Activated CD8-positive, alpha-beta memory T cell treated with anti-CD3 and anti-CD28 coated beads, Interleukin-2, amount 10 ng/mL, durations not matched to agents 7 days and 5 days (primary cell): ENCODE measurements at regions of chr3 and their contacts with region 1.

Region 1: DNA sequence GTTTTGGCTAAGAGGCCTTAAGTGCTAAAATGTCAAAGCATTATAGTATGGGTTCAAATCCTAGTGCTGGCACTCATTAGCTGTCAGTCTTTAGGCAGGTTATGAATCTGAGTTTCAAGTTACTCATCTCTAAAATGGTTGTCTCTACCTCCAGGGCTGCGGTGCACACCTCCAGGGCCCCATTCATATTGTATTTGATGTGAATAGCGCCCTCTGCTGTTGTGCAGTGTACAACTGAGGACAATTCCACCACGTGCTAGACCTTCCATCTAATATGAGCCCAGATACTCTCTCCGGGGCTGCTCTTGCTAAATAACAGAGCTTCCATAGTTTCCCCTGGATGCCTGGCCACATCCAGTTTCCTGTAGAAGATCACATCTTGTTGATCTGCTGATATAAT is 54.3 kb downstream of the OXNAD1 start:
- DNase-seq: peak; percentile 92
- ATAC-seq: peak; percentile 93
- H3K4me3 Mint-ChIP-seq: no peak overlapping the region
- H3K27ac Mint-ChIP-seq: peak overlapping the region; percentile 74
- H3K4me1 Mint-ChIP-seq: peaks cover 59% of the 10 kb centered on the region
- H3K27me3 Mint-ChIP-seq: no peaks in the 10 kb centered on the region

Region 2: DNA sequence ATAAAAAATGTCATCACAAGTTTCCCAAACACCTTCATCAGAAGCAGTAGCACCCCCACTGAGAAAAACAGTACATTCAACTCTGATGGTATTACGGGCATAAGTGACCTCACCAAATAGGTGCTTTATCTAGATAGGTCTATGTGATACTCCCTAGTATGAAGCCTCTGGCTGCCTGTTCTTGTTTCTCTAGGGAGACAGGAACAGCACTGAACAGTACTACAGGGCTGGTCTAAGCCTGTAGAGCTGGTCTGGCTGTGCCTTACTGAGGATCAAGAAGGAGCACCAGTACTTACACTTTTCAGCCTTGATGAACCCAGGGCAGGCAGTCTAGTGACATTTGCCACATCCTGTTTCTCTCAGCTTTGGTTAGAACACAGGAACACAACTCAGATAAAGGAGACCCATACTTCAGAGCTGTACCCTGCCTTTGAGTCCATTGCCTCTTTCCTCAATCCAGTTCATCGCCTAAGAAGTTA is 18.4 kb before region 1 on chr3:
- CTCF ChIA-PET with region 1: interaction called, 15 read pairs
- DNase-seq: peak; percentile 81
- ATAC-seq: peak; percentile 84
- H3K4me3 Mint-ChIP-seq: peak overlapping the region; percentile 78
- H3K27ac Mint-ChIP-seq: peak overlapping the region; percentile 94
- H3K4me1 Mint-ChIP-seq: peaks cover 95% of the 10 kb centered on the region
- H3K27me3 Mint-ChIP-seq: no peaks in the 10 kb centered on the region

Region 3: DNA sequence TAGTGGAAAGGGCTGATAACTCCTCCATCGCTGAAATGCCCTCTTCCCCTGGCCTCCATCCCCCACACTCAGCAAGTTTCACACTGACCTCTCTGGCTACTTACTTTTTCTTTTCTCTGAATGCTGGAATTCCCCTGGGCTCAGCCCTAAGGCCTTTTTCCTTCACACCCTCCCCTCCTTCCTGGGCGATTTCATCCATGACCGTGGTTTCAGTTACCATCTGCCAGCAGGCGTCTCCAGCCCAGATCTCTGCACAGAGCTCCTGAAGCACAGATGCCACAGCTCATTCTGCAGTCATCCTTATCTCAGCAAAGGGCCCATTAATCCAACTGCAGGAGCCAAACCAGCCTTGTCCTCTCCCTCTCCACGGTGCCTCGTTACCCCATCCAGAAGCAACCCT is 80.2 kb after region 1 on chr3:
- CTCF ChIA-PET with region 1: no interaction called
- DNase-seq: no peak
- ATAC-seq: no peak
- H3K4me3 Mint-ChIP-seq: no peak overlapping the region
- H3K27ac Mint-ChIP-seq: peak overlapping the region; percentile 2
- H3K4me1 Mint-ChIP-seq: peaks cover 22% of the 10 kb centered on the region
- H3K27me3 Mint-ChIP-seq: no peaks in the 10 kb centered on the region